ENCODE measurements at regions of chr17 and their contacts with region 1.

Region 1: GRCh38 chr17:7045909-7046724 is 2.2 kb upstream of the SLC16A11 start:
- DNase-seq: peak; percentile 75
- H3K4me3 Mint-ChIP-seq: peak overlapping the region; percentile 69
- H3K27ac Mint-ChIP-seq: peak overlapping the region; percentile 86
- H3K4me1 Mint-ChIP-seq: peaks cover 31% of the 10 kb centered on the region
- H3K27me3 Mint-ChIP-seq: peaks cover 11% of the 10 kb centered on the region

Region 2: DNA sequence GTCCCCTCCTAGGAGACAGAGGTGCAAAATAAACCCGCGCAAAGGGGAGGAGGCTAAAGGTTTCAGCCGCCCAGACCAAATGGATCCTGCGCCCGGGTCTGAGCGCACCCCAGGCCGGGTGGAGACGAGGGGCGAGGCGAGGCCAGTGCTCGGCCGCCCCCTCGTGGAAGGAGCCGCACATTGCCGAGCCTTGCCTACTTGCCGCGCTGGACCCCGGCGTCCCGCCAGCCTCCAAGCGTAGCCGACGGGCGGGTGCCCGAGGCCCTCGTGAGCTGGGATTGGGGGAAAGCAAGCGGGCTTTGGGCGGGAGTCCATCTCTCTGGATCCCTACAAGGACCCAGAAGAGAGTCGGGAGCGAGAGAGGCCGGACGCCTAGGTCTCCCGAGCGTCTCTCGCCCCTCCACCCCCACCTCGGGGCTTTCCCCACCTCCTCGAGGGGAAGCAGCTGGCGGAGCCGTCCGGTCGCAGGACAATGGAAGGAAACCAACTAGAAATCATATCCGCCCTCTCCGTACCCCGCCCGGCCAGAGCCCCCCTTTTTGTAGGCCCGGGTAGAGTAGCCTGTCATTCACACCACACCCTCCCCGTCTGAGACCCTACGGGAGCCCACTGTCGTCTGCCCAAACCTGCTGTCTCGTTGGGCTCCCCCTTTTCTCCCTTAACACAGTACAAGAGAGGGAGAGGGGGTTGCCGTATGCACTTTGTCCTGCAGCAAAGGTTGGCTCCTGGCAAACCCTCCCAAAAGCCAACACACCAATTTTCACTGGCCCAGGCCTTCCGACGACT is 23.9 kb before region 1 on chr17:
- CTCF ChIA-PET with region 1: interaction called, 18 read pairs
- POLR2A ChIA-PET with region 1: no interaction called
- DNase-seq: peak; percentile 75
- H3K4me3 Mint-ChIP-seq: peak overlapping the region; percentile 22
- H3K27ac Mint-ChIP-seq: peak overlapping the region; percentile 79
- H3K4me1 Mint-ChIP-seq: peaks cover 60% of the 10 kb centered on the region
- H3K27me3 Mint-ChIP-seq: peaks cover 4% of the 10 kb centered on the region

Region 3: DNA sequence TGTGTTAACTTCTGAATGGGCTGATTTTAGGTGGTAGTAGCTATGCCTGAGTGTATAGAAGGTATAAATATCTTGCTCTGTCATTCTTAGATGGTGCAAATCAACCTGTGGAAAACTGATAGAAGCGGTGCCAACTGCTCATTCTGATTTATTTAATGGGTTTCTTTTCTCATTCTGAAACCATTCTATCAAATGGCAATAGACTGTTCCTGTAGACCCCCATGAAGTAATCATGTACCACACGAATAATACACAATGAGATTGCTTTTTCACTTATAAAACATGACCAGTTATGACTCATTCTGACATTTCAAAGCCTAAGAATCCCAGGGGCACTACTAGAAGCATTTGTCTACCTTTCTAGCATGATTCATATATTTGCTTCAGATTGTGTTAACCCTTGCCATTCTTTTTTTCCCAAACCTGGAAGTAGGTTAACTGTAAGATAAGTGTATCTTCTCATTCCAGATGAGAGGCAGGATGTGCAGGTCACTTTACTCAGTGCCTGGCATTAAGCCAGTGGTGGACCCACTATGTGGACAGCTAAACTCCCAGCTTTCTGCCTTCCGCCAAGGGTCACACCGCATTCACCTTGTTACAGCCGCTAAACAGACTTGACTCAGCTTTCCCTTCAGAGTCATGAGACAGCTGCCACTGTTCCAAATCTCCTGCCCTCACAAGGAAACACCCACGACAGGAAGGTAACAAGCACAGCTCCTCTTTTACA is 14.2 kb after region 1 on chr17:
- CTCF ChIA-PET with region 1: interaction called, 14 read pairs
- POLR2A ChIA-PET with region 1: no interaction called
- DNase-seq: no peak
- H3K4me3 Mint-ChIP-seq: no peak overlapping the region
- H3K27ac Mint-ChIP-seq: no peak overlapping the region
- H3K4me1 Mint-ChIP-seq: peaks cover 5% of the 10 kb centered on the region
- H3K27me3 Mint-ChIP-seq: no peaks in the 10 kb centered on the region

Region 4: GRCh38 chr17:7141824-7142223 is 95.7 kb after region 1 on chr17:
- CTCF ChIA-PET with region 1: interaction called, 19 read pairs
- POLR2A ChIA-PET with region 1: no interaction called
- DNase-seq: no peak
- H3K4me3 Mint-ChIP-seq: no peak overlapping the region
- H3K27ac Mint-ChIP-seq: no peak overlapping the region
- H3K4me1 Mint-ChIP-seq: no peaks in the 10 kb centered on the region
- H3K27me3 Mint-ChIP-seq: peaks cover 8% of the 10 kb centered on the region

Region 5: GRCh38 chr17:7484919-7485377 is 438.8 kb after region 1 on chr17:
- CTCF ChIA-PET with region 1: no interaction called
- POLR2A ChIA-PET with region 1: interaction called, 13 read pairs
- DNase-seq: no peak
- H3K4me3 Mint-ChIP-seq: peak overlapping the region; percentile 94
- H3K27ac Mint-ChIP-seq: peak overlapping the region; percentile 99
- H3K4me1 Mint-ChIP-seq: peaks cover 72% of the 10 kb centered on the region
- H3K27me3 Mint-ChIP-seq: no peaks in the 10 kb centered on the region

Measured in activated CD4-positive, alpha-beta T cell treated with anti-CD3 and anti-CD28 coated beads, Interleukin-2, amount 10 ng/mL, durations not matched to agents 7 days and 5 days (primary cell).